HepG2 (cell line): ENCODE measurements at regions of chr3 and their contacts with region 1.

Region 1: DNA sequence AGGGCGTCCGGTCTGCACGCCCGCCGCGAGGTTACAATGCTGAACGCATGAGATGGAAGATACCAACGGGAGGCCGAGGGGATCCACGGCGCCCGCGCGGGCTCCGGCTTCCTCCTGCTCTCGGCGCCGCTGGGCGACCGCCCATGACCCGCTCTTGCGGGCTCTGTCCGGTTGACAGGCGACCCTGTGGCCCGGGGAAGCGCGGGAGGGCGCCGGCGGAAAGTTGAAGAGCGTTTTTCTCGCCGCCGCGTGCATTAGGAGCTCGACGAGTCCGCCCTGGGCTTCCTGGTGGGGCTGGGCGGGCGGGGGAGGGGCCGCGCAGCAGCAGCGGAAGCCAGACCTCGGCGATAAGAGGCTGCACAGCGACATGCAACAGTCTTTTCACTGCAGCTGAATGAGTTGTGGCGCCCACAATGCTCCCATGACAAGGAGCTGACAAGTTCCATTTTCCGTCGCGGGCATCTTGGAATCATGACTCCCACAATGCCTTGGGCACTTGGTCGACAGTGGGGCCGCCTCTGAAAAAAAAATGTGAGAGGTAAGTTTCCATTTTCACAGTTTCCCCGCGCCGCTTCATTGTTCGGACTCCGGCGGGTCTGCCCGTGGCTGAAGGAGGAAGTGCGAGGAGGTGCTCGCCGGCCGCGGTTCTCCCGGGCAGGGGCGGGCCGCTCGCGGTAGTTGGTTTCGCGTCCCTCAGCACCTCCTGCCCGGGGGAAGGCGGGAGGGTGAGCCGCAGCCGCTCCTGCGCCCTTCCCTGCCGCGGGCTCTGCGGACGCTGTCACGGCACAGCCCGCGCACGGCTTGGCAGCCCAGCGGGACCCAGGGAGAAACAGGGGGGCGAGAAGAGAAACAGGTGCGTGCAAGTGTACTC is at the start of gene MBNL1:
- DNase-seq: peak; percentile 70
- ATAC-seq: peak; percentile 81
- H3K4me3 ChIP-seq: peak within 1 kb of the TSS; percentile 81 to 87 (median 86)
- H3K27ac ChIP-seq: peak within 1 kb of the TSS; percentile 97
- H3K4me1 ChIP-seq: peaks cover 56% of the 10 kb centered on the region
- H3K27me3 ChIP-seq: no peaks in the 10 kb centered on the region
- CTCF ChIP-seq: no peak
- EP300 ChIP-seq: no peak
- POLR2A ChIP-seq: peak; percentile 85 to 93
- RAD21 ChIP-seq: 0 out of 2 replicates have a peak, but pooled peaks have one; percentile 10
- total RNA-seq, gene MBNL1: 55.4 TPM in 2 replicates

Region 2: DNA sequence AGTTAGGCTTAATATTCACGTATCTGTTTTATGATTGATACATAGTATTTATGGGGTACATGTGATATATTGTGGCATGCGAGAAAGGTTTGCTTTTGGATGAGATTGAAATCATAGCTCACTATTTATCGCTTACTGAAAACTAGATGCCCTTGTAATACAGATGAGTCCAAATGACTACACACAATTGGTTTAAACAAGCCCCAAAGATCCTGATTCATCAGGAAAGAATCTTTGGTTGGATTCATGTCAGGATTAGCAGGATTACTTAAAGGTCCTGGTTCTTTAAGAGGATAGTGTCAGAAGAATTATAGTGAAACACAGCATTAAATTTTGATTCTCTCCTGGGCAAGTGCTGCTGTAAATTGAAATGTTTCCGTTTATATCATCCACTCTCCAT is 473.5 kb before region 1 on chr3:
- CTCF ChIA-PET with region 1: no interaction called
- POLR2A ChIA-PET with region 1: no interaction called
- in situ Hi-C with region 1: no loop called
- intact Hi-C with region 1: no loop called
- DNase-seq: no peak
- ATAC-seq: no peak
- H3K4me3 ChIP-seq: no peak overlapping the region
- H3K27ac ChIP-seq: no peak overlapping the region
- H3K4me1 ChIP-seq: peaks cover 24% of the 10 kb centered on the region
- H3K27me3 ChIP-seq: no peaks in the 10 kb centered on the region
- CTCF ChIP-seq: no peak
- EP300 ChIP-seq: no peak
- POLR2A ChIP-seq: no peak
- RAD21 ChIP-seq: no peak

Region 3: GRCh38 chr3:152183473-152183872 is 85.3 kb before region 1 on chr3:
- CTCF ChIA-PET with region 1: no interaction called
- POLR2A ChIA-PET with region 1: no interaction called
- in situ Hi-C with region 1: no loop called
- intact Hi-C with region 1: loop called (anchors 1 kb)
- DNase-seq: peak; percentile 54
- ATAC-seq: peak; percentile 96
- H3K4me3 ChIP-seq: no peak overlapping the region
- H3K27ac ChIP-seq: no peak overlapping the region
- H3K4me1 ChIP-seq: no peaks in the 10 kb centered on the region
- H3K27me3 ChIP-seq: no peaks in the 10 kb centered on the region
- CTCF ChIP-seq: peak; percentile 80
- EP300 ChIP-seq: no peak
- POLR2A ChIP-seq: no peak
- RAD21 ChIP-seq: peak; percentile 86

Region 4: GRCh38 chr3:152258448-152259393 is 10.1 kb before region 1 on chr3:
- CTCF ChIA-PET with region 1: no interaction called
- POLR2A ChIA-PET with region 1: interaction called, 11 read pairs
- in situ Hi-C with region 1: no loop called
- intact Hi-C with region 1: no loop called
- DNase-seq: peak; percentile 94
- ATAC-seq: peak; percentile 98
- H3K4me3 ChIP-seq: peak overlapping the region in 1 of 3 experiments; percentile 6; a peak in 1 of 6 replicates
- H3K27ac ChIP-seq: peak overlapping the region; percentile 56
- H3K4me1 ChIP-seq: peaks cover 35% of the 10 kb centered on the region
- H3K27me3 ChIP-seq: no peaks in the 10 kb centered on the region
- CTCF ChIP-seq: no peak
- EP300 ChIP-seq: peak; percentile 80 to 98
- POLR2A ChIP-seq: no peak
- RAD21 ChIP-seq: no peak

Region 5: GRCh38 chr3:152281133-152281713 is 12.4 kb after region 1 on chr3:
- CTCF ChIA-PET with region 1: no interaction called
- POLR2A ChIA-PET with region 1: interaction called, 13 read pairs
- in situ Hi-C with region 1: no loop called
- intact Hi-C with region 1: no loop called
- DNase-seq: peak; percentile 54
- ATAC-seq: peak; percentile 90
- H3K4me3 ChIP-seq: no peak overlapping the region
- H3K27ac ChIP-seq: peak overlapping the region; percentile 28
- H3K4me1 ChIP-seq: peaks cover 56% of the 10 kb centered on the region
- H3K27me3 ChIP-seq: no peaks in the 10 kb centered on the region
- CTCF ChIP-seq: no peak
- EP300 ChIP-seq: no peak
- POLR2A ChIP-seq: no peak
- RAD21 ChIP-seq: no peak

Region 6: GRCh38 chr3:152298393-152299242 is 29.8 kb after region 1 on chr3:
- CTCF ChIA-PET with region 1: no interaction called
- POLR2A ChIA-PET with region 1: interaction called, 17 read pairs
- in situ Hi-C with region 1: no loop called
- intact Hi-C with region 1: loop called (anchors 1 kb)
- DNase-seq: peak; percentile 97
- ATAC-seq: peak; percentile 90
- H3K4me3 ChIP-seq: peak overlapping the region; percentile 39 to 70 (median 46)
- H3K27ac ChIP-seq: peak overlapping the region; percentile 97
- H3K4me1 ChIP-seq: peaks cover 78% of the 10 kb centered on the region
- H3K27me3 ChIP-seq: no peaks in the 10 kb centered on the region
- CTCF ChIP-seq: no peak
- EP300 ChIP-seq: peak in 1 of 2 experiments; percentile 23; a peak in 1 of 4 replicates
- POLR2A ChIP-seq: peak; percentile 23 to 89; a peak in 2 of 4 replicates
- RAD21 ChIP-seq: no peak

Region 7: DNA sequence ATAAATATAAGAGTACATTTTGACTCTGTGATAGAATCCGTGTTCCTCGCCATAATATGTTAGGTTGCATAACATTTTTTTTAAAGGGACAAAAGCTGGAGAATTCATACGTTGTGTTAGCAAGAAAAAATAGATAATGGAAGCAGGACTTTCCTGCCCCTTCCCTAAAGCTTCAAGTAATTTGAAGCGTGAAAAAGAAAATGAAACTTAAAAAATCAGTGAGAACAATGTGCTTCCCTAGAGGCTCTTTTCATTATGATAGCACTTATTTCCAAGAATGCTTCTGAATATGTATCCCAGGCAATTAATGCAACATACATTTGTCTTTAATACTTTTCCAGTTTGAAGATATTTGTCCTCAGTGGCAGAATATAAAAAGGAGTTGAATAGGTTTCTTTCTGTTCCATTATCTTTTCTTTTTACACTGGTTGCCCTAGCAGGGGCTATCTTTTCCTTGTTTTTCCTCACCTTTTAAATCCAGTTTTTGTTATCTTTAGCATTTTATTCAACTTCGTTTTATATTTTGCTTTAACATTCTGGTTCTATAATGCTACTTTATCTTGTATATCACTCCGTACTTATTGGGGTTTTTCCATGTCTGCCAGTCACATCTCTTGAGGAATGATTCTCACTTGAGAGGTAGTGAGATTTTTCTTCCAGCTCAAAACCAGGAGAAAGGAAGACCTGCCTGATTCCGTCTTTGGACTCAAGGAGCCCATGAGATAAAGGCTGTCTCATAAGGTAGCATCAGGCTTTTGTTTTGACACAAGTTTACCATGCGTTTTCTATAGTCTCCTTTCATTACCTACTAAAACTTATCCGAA is 113.7 kb after region 1 on chr3:
- CTCF ChIA-PET with region 1: no interaction called
- POLR2A ChIA-PET with region 1: interaction called, 3 read pairs
- in situ Hi-C with region 1: no loop called
- intact Hi-C with region 1: loop called (anchors 5 kb)
- DNase-seq: no peak
- ATAC-seq: no peak
- H3K4me3 ChIP-seq: no peak overlapping the region; a peak in 1 of 6 replicates
- H3K27ac ChIP-seq: peak overlapping the region; percentile 43
- H3K4me1 ChIP-seq: peaks cover 69% of the 10 kb centered on the region
- H3K27me3 ChIP-seq: no peaks in the 10 kb centered on the region
- CTCF ChIP-seq: no peak
- EP300 ChIP-seq: no peak
- POLR2A ChIP-seq: no peak
- RAD21 ChIP-seq: no peak

Region 8: DNA sequence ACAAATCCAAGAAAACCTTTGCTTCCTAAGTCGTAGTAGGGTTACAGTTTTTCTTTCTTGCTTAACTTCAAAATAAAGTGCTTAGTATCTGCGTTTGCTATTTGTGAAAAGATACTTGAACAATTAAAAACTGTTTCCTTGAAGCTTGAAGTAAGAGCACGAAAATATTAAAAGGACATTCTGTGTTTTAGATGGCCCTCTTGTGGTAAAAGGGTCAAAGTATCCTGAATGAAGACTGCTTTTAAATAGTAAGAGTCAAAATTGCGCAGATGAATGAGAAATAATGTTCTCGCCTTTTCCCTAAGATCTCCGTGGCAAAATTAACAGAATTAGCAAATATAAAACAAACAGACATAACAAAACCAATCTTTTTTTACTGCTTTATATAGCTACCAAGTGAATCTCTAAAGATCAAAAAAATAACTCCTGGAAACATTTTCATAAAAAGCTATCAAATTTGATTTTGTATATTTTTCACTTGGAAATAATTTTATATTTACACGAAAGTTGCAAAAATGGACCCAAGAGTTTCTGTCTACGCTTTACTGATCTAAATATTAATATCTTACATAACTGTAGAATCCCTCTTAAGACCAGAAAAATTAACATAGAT is 175.3 kb after region 1 on chr3:
- CTCF ChIA-PET with region 1: interaction called, 3 read pairs
- POLR2A ChIA-PET with region 1: interaction called, 6 read pairs
- in situ Hi-C with region 1: no loop called
- intact Hi-C with region 1: loop called (anchors 2 kb)
- DNase-seq: peak; percentile 42
- ATAC-seq: peak; percentile 42; the same call in 1 of the 3 replicates
- H3K4me3 ChIP-seq: no peak overlapping the region
- H3K27ac ChIP-seq: no peak overlapping the region
- H3K4me1 ChIP-seq: no peaks in the 10 kb centered on the region
- H3K27me3 ChIP-seq: no peaks in the 10 kb centered on the region
- CTCF ChIP-seq: peak; percentile 65
- EP300 ChIP-seq: no peak
- POLR2A ChIP-seq: no peak
- RAD21 ChIP-seq: peak; percentile 34; the same call in 1 of the 2 replicates